Activated CD4-positive, alpha-beta T cell treated with anti-CD3 and anti-CD28 coated beads, Interleukin-2, amount 10 ng/mL, durations not matched to agents 24 days and 14 days (primary cell): ENCODE measurements at regions of chr6 and their contacts with region 1.

Region 1: GRCh38 chr6:33299237-33299944 is 649 bp upstream of the RGL2 start:
- DNase-seq: peak; percentile 98
- H3K4me3 Mint-ChIP-seq: peak overlapping the region; percentile 94
- H3K27ac Mint-ChIP-seq: peak overlapping the region; percentile 99
- H3K4me1 Mint-ChIP-seq: peaks cover 28% of the 10 kb centered on the region
- H3K27me3 Mint-ChIP-seq: peaks cover 2% of the 10 kb centered on the region

Region 2: GRCh38 chr6:32195652-32195901 is 1103.8 kb before region 1 on chr6:
- intact Hi-C with region 1: loop called (anchors 10 kb)
- DNase-seq: peak; percentile 100
- H3K4me3 Mint-ChIP-seq: peak overlapping the region; percentile 98
- H3K27ac Mint-ChIP-seq: peak overlapping the region; percentile 99
- H3K4me1 Mint-ChIP-seq: peaks cover 40% of the 10 kb centered on the region
- H3K27me3 Mint-ChIP-seq: peaks cover 2% of the 10 kb centered on the region

Region 3: DNA sequence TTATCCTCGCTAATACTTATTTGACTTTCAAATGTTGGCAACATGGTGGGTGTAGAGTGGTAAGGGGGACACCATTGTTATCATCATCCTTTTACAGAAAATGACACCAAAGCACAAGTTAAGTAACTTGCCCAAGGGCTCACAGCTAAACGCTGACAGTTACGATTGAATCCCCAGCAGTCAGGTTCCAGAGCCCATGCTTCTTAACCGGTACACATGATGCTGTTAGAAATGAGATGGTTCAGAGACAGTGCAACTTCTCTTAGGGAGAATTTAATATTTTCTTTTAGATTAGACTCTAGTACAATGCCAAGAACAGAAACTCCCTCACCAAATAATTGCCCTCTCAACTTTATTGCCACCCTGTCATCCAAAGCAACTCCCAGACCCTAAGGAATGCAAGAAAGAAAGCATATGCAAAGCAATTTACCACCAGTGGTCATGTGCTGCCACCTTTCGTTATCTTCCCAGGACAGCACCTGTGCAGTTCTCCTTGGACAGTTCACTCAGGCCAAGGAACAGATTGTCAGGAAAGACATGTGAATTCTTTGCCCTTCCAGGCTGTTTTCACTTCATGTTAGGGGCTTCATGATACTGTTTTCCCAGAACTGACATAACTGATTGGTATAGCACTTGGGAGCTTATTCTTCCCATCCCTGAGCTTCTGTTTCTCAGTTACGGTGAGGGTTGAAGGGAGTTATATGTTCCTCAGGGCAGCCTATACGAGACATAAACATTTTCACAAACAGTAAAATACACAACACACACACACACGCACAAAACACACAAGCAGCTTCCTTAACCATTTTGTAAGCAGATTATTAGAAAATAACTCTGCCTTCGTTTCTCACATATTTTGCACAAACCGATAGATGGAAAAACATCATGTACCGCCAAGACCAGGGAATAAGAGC is 351.6 kb before region 1 on chr6:
- intact Hi-C with region 1: no loop called
- DNase-seq: peak; percentile 81
- H3K4me3 Mint-ChIP-seq: no peak overlapping the region
- H3K27ac Mint-ChIP-seq: no peak overlapping the region
- H3K4me1 Mint-ChIP-seq: peaks cover 46% of the 10 kb centered on the region
- H3K27me3 Mint-ChIP-seq: no peaks in the 10 kb centered on the region

Region 4: DNA sequence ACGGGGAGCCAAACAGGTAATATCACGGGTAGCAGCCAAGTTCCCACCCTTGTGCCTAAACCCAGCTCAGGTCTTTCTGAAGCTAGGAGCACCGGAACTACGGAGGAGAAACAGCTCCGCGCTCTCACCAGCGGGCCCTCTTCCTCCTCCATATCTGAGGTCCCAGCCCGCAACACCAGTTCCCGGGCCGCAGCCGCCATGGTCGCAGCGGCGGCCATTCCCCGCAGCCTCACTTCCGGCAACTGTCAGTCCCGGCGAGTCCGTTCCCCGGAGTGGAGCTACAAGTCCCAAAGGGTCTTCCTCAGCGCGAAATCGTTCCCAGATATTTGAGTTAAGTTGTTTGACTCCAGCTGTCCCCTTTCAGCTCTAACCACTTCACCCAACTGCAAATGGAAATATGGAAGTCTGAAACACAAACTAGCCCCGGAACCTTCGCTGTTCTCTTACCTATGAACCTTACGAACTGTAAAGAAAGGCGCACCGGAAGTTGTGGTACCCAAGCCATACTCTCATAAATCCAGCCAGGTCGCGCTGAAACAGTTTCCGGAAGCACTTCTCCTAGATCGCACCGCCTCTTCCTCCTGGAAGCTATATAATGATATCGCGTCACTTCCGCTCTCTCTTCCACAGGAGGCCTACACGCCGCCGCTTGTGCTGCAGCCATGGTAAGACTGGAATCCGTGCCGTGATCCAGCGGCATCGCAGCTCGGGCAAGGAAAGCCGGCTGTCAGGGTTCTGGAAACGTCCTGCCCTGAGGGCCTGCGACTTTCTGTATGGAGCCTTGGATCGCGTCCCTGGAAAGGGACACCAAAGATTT is 27.7 kb before region 1 on chr6 and contains the starts of genes RPS18 and VPS52:
- intact Hi-C with region 1: loop called (anchors 1 kb)
- DNase-seq: peak; percentile 97
- H3K4me3 Mint-ChIP-seq: peak within 1 kb of the TSS; percentile 94
- H3K27ac Mint-ChIP-seq: peak within 1 kb of the TSS; percentile 98
- H3K4me1 Mint-ChIP-seq: peaks cover 54% of the 10 kb centered on the region
- H3K27me3 Mint-ChIP-seq: no peaks in the 10 kb centered on the region
- total RNA-seq, gene RPS18: 3,200 and 3,212 TPM in 2 replicates
- total RNA-seq, gene VPS52: 59.9 and 64.9 TPM in 2 replicates

Region 5: GRCh38 chr6:33288921-33289748 is 10.3 kb before region 1 on chr6 and contains the starts of genes PFDN6 and WDR46:
- intact Hi-C with region 1: loop called (anchors 1 kb)
- DNase-seq: peak; percentile 95
- H3K4me3 Mint-ChIP-seq: peak within 1 kb of the TSS; percentile 100
- H3K27ac Mint-ChIP-seq: peak within 1 kb of the TSS; percentile 95
- H3K4me1 Mint-ChIP-seq: peaks cover 28% of the 10 kb centered on the region
- H3K27me3 Mint-ChIP-seq: no peaks in the 10 kb centered on the region
- total RNA-seq, gene PFDN6: 114 and 132 TPM in 2 replicates
- total RNA-seq, gene WDR46: 106 and 120 TPM in 2 replicates

Region 6: GRCh38 chr6:33323623-33323948 is 24.2 kb after region 1 on chr6:
- intact Hi-C with region 1: loop called (anchors 1 kb)
- DNase-seq: no peak
- H3K4me3 Mint-ChIP-seq: peak overlapping the region; percentile 93
- H3K27ac Mint-ChIP-seq: peak overlapping the region; percentile 94
- H3K4me1 Mint-ChIP-seq: peaks cover 39% of the 10 kb centered on the region
- H3K27me3 Mint-ChIP-seq: no peaks in the 10 kb centered on the region

Region 7: DNA sequence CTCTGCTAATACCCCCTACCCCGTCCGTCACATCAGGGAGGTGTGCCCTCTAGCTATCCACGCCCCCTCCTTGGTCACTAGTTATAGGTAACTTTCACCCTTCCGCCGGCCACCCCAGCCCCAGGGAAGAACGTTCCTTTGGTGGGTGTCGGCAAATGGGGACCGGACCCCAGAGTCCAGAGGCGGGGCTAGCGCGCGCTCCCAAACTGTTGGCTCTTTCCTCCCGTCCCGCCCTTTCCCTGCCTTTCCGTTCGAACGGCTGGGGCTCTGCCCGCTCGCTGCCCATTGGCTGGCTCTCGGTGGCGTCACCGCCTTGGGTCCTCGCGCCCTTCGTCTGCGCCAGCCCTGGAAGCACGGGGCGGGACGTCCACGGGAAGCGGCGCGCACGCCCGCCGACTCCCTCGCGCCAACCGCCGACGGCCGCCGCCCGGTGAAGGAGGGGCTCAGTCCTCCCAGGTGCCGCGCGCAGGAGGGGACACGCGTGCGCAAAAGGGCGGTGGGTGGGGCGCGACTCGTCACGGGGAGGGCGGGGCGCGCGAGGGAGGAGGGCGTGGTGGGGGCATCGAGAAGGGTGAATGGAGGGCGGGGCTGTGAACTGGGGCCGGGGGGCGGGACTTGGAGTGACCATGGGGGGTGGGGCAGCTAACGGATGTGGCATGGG is 110.8 kb after region 1 on chr6:
- intact Hi-C with region 1: loop called (anchors 2 kb)
- DNase-seq: peak; percentile 99
- H3K4me3 Mint-ChIP-seq: peak overlapping the region; percentile 92
- H3K27ac Mint-ChIP-seq: peak overlapping the region; percentile 91
- H3K4me1 Mint-ChIP-seq: peaks cover 40% of the 10 kb centered on the region
- H3K27me3 Mint-ChIP-seq: no peaks in the 10 kb centered on the region